HCT116 (cell line): ENCODE measurements at regions of chr5 and their contacts with region 1.

Region 1: GRCh38 chr5:96336351-96336985 is 96.6 kb downstream of the PCSK1 start:
- DNase-seq: peak; percentile 71
- ATAC-seq: peak; percentile 95
- H3K4me3 ChIP-seq: no peak overlapping the region
- H3K27ac ChIP-seq: no peak overlapping the region
- H3K4me1 ChIP-seq: 0 out of 4 replicates have a peak, but pooled peaks cover 0 to 6% of the 10 kb centered on the region in 2 experiments
- H3K27me3 ChIP-seq: no peaks in the 10 kb centered on the region
- CTCF ChIP-seq: peak; percentile 86 to 93 (median 87)
- POLR2A ChIP-seq: no peak
- RAD21 ChIP-seq: peak; percentile 94

Region 2: GRCh38 chr5:95646554-95647431 is 689.7 kb before region 1 on chr5 and contains the start of gene RFESD:
- CTCF ChIA-PET with region 1: no interaction called
- POLR2A ChIA-PET with region 1: no interaction called
- RAD21 ChIA-PET with region 1: no interaction called
- intact Hi-C with region 1: loop called (anchors 5 kb)
- DNase-seq: peak; percentile 91
- ATAC-seq: peak; percentile 93
- H3K4me3 ChIP-seq: peak within 1 kb of the TSS; percentile 48 to 65
- H3K27ac ChIP-seq: peak within 1 kb of the TSS; percentile 76
- H3K4me1 ChIP-seq: peaks cover 9 to 33% of the 10 kb centered on the region in 2 experiments; a peak in 3 of 4 replicates
- H3K27me3 ChIP-seq: no peaks in the 10 kb centered on the region
- CTCF ChIP-seq: peak in 1 of 3 experiments; percentile 10; a peak in 1 of 6 replicates
- POLR2A ChIP-seq: peak; percentile 72
- RAD21 ChIP-seq: peak; percentile 34
- total RNA-seq, gene RFESD: 4.1 TPM

Region 3: GRCh38 chr5:95781101-95781583 is 555.3 kb before region 1 on chr5:
- CTCF ChIA-PET with region 1: interaction called, 5 read pairs
- POLR2A ChIA-PET with region 1: no interaction called
- RAD21 ChIA-PET with region 1: no interaction called
- intact Hi-C with region 1: loop called (anchors 1 kb)
- DNase-seq: peak; percentile 62
- ATAC-seq: peak; percentile 99
- H3K4me3 ChIP-seq: no peak overlapping the region
- H3K27ac ChIP-seq: no peak overlapping the region
- H3K4me1 ChIP-seq: no peaks in the 10 kb centered on the region
- H3K27me3 ChIP-seq: no peaks in the 10 kb centered on the region
- CTCF ChIP-seq: peak; percentile 88 to 99 (median 95)
- POLR2A ChIP-seq: no peak
- RAD21 ChIP-seq: peak; percentile 94

Region 4: GRCh38 chr5:95858661-95859326 is 477.7 kb before region 1 on chr5:
- CTCF ChIA-PET with region 1: interaction called, 12 read pairs
- POLR2A ChIA-PET with region 1: interaction called, 3 read pairs
- RAD21 ChIA-PET with region 1: no interaction called
- intact Hi-C with region 1: loop called (anchors 1 kb)
- DNase-seq: peak; percentile 71
- ATAC-seq: peak; percentile 96
- H3K4me3 ChIP-seq: peak overlapping the region; percentile 24 to 49
- H3K27ac ChIP-seq: no peak overlapping the region
- H3K4me1 ChIP-seq: peaks cover 6 to 40% of the 10 kb centered on the region in 2 experiments; a peak in 3 of 4 replicates
- H3K27me3 ChIP-seq: no peaks in the 10 kb centered on the region
- CTCF ChIP-seq: peak; percentile 90 to 98 (median 95)
- POLR2A ChIP-seq: no peak
- RAD21 ChIP-seq: peak; percentile 99

Region 5: DNA sequence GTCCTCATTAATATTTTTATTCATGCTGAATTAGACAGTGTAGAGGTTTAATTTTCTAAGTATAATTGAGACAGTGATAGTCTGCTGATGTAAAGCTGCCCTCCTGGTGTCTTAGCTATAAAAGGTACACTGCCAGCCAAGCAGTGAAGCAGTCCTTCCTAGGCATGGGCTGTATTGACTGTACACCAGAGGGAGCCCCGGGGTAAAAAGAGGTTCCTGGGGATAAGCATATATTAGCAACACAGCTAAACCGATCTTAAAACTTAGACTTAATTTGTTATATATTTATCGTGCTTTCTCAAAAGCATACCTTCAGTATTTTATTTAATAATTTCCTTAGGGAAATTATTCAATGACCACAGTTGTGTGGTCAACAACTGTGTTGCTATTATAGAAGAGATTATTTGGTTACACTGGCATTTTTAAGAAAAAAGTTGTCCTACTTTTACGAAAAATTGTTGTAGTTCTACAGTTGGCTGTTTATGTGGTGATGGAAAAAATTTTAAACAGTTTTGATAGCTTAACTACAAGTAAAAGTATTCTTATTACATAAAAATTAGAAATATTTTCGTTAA is 443.6 kb before region 1 on chr5:
- CTCF ChIA-PET with region 1: interaction called, 18 read pairs
- POLR2A ChIA-PET with region 1: no interaction called
- RAD21 ChIA-PET with region 1: interaction called, 4 to 9 read pairs
- intact Hi-C with region 1: loop called (anchors 1 kb)
- DNase-seq: peak; percentile 16
- ATAC-seq: peak; percentile 90
- H3K4me3 ChIP-seq: no peak overlapping the region
- H3K27ac ChIP-seq: no peak overlapping the region
- H3K4me1 ChIP-seq: no peaks in the 10 kb centered on the region
- H3K27me3 ChIP-seq: no peaks in the 10 kb centered on the region
- CTCF ChIP-seq: peak; percentile 65 to 72 (median 65); a peak in 5 of 6 replicates
- POLR2A ChIP-seq: no peak
- RAD21 ChIP-seq: peak; percentile 80

Region 6: DNA sequence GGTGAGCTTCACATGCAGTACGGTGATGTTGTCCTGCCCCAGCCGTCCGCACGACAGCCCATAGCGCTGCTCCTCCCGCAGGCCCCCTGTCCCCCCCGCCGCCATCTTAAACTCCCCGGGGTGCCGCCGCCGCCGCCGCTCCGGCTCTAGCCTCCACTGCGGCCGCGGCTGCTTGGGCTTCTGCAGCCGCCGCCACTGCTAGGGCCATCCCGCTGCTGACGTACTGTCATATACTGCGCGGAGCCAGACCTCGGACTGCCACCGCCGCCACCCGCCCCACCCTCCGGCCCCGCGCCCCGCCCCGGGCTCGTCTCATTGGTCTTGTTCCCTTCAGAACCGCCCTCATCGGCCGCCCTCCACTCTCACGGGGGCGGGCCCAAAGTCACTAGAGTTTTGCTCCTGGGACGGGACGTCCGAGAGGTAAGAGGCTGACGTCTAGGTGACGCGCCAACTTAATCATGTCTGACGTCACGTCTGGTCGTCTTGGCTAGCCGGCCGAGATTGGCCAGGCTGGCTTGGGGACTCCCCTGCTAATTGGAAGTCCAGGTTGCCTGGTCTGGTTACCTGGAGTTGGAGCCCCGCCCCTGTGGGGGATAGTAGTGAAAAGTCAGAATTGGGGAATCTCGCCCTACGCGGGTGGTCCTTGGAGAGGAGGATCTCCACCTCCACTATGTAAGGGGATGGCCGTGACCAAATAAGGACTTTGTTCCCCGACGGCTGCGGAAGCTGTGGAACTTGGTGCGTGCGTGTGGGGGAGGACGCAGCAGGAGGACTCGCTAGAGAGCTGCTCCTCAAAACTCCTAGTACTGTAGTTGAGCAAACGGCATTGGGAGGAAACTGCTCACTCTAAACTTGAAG is 374.6 kb before region 1 on chr5 and contains the start of gene ELL2:
- CTCF ChIA-PET with region 1: interaction called, 4 read pairs
- POLR2A ChIA-PET with region 1: no interaction called
- RAD21 ChIA-PET with region 1: no interaction called
- intact Hi-C with region 1: loop called (anchors 2 kb)
- DNase-seq: peak; percentile 100
- ATAC-seq: peak; percentile 84
- H3K4me3 ChIP-seq: peak within 1 kb of the TSS; percentile 83 to 84
- H3K27ac ChIP-seq: peak within 1 kb of the TSS; percentile 84
- H3K4me1 ChIP-seq: peaks cover 21 to 48% of the 10 kb centered on the region in 2 experiments
- H3K27me3 ChIP-seq: no peaks in the 10 kb centered on the region
- CTCF ChIP-seq: no peak
- POLR2A ChIP-seq: peak; percentile 24
- RAD21 ChIP-seq: no peak
- total RNA-seq, gene ELL2: 29.8 TPM

Region 7: DNA sequence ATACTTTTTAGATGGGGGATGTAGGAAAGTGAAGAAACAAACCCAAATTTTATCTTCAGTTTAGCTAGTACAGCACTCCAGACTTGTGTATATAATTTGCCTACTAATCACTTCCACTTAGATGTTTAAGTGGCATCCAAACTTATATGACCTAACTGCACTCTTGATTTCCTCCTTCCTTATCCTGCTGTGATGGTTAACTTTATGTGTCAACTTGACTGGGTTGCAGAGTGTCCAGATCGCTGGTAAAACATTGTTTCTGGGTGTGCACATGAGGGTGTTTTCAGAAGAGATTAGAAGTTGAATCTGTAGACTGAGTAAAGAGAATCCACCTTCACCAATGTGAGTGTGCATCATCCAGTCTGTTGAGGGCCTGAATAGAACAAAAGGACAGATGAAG is 16.8 kb after region 1 on chr5:
- CTCF ChIA-PET with region 1: no interaction called
- POLR2A ChIA-PET with region 1: no interaction called
- RAD21 ChIA-PET with region 1: no interaction called
- intact Hi-C with region 1: no loop called
- DNase-seq: no peak
- ATAC-seq: no peak
- H3K4me3 ChIP-seq: no peak overlapping the region
- H3K27ac ChIP-seq: no peak overlapping the region
- H3K4me1 ChIP-seq: no peaks in the 10 kb centered on the region
- H3K27me3 ChIP-seq: no peaks in the 10 kb centered on the region
- CTCF ChIP-seq: no peak
- POLR2A ChIP-seq: no peak
- RAD21 ChIP-seq: no peak